Activated B cell treated with CpG ODN at 0.5 μM for 24 hours (primary cell): ENCODE measurements at regions of chr7 and their contacts with region 1.

Region 1: DNA sequence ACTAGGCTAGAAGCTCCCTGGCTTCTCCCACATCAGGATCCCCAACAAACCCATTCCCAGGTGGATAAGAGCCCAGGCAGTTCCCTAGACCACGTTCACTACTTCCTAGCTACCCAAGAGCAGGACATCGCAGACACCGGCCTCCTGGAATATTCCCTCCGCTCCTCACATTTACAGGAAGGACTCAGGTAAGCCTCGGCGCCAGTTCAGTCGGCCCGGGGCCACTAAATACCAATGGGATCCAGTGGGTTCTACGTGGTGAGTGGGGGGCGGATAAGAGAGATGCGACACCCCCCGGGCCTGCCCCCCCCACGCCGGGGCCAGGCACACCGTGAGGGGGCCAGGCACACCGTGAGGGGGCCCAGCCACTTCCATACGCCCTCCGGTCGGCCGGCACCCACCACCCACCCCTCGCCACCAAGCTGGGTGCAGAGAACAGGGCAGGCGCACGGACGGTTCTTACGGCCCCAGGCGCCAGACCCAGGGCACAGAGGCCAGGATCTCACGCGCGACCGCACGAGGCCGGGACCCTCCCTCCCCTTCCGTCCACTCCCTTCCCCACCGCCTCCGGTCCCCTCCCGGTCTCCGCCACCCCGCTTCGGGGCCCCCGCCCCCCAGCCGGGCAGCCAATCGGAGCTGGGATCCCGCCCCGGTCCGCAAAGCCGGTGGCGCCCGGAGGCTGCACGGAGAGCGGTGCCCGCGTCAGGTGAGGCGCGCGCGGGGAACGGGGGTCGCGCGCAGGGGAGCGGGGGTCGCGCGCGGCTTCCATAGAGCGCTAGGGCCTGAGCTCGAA is at the start of gene BLVRA:
- DNase-seq: peak; percentile 61
- ATAC-seq: peak; percentile 83
- H3K4me3 Mint-ChIP-seq: peak within 1 kb of the TSS; percentile 86
- H3K27ac Mint-ChIP-seq: peak within 1 kb of the TSS; percentile 37
- H3K4me1 Mint-ChIP-seq: peaks cover 12% of the 10 kb centered on the region
- H3K27me3 Mint-ChIP-seq: no peaks in the 10 kb centered on the region
- CTCF ChIP-seq: no peak
- total RNA-seq, gene BLVRA: 8.5 and 10.2 TPM in 2 replicates

Region 2: DNA sequence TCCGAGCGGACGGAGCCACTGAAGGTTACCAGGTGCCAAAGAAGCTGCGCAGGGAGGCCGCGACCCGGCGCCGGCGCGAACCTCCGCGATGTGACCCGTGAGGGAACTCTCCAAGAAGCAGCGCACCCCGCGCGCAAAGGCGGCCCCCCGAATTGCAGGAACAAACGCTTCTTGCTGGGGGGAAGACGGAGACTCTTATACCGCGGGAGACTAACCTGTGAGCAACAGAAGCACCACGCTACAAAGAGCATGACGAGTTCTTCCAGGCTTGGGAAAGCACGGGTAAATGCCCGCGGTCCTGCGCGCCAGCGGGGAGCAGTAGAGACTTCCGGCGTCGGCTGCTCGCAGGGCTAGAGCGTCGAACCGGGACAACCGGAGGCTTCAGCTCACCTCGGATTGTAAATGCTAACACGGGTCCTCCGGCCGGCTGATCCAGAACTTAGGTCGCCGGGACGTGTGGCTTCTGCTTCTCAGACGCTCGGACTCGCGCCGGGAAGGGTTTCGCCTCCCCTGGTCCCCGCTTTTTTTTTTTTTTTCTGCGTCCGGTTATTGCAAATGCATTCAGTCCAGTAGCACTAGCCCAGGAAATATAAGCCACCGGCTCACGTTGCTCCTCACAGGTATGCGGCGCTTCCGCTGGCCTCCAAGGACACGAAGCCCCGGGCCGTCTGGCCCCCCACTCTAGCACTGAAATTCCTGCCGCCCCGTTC is 28.9 kb before region 1 on chr7 and contains the start of gene COA1:
- CTCF ChIA-PET with region 1: no interaction called
- POLR2A ChIA-PET with region 1: interaction called, 8 read pairs
- intact Hi-C with region 1: loop called (anchors 2 kb)
- DNase-seq: peak; percentile 75
- ATAC-seq: peak; percentile 92
- H3K4me3 Mint-ChIP-seq: peak within 1 kb of the TSS; percentile 95
- H3K27ac Mint-ChIP-seq: peak within 1 kb of the TSS; percentile 88
- H3K4me1 Mint-ChIP-seq: peaks cover 40% of the 10 kb centered on the region
- H3K27me3 Mint-ChIP-seq: no peaks in the 10 kb centered on the region
- CTCF ChIP-seq: no peak
- total RNA-seq, gene COA1: 49.2 and 56.9 TPM in 2 replicates